ENCODE measurements at regions of chr5 and their contacts with region 1.

Region 1: GRCh38 chr5:135887351-135887864 is 8.2 kb downstream of the IL9 start:
- DNase-seq: peak; percentile 56 to 65
- H3K4me3 ChIP-seq: no peak overlapping the region
- H3K27ac ChIP-seq: no peak overlapping the region
- H3K4me1 ChIP-seq: peaks cover 15% of the 10 kb centered on the region
- H3K27me3 ChIP-seq: peaks cover 20% of the 10 kb centered on the region
- CTCF ChIP-seq: peak; percentile 90

Region 2: DNA sequence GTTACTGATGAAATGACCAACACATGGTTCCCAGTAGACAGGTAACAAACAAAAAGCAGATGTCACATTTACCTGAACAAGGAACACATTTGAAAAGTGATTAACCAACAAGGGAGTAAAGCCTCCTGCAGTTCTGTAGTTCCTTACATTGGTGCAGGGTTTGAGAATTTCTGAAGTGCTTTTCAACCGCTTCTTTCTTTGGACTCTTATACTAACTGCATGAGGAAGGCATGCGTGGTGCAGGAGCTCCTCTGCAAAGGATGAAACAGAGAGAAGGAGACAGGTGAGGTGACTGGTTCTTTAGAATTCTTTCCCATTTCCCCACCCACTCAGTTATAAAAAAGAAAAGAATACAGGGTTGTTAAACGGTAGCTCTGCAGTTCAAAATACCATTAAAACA is 12.9 kb after region 1 on chr5:
- CTCF ChIA-PET with region 1: no interaction called
- POLR2A ChIA-PET with region 1: no interaction called
- intact Hi-C with region 1: no loop called
- DNase-seq: no peak
- H3K4me3 ChIP-seq: no peak overlapping the region
- H3K27ac ChIP-seq: no peak overlapping the region
- H3K4me1 ChIP-seq: peaks cover 3% of the 10 kb centered on the region
- H3K27me3 ChIP-seq: peaks cover 28% of the 10 kb centered on the region; the same call in 1 of the 2 replicates
- CTCF ChIP-seq: no peak

Region 3: DNA sequence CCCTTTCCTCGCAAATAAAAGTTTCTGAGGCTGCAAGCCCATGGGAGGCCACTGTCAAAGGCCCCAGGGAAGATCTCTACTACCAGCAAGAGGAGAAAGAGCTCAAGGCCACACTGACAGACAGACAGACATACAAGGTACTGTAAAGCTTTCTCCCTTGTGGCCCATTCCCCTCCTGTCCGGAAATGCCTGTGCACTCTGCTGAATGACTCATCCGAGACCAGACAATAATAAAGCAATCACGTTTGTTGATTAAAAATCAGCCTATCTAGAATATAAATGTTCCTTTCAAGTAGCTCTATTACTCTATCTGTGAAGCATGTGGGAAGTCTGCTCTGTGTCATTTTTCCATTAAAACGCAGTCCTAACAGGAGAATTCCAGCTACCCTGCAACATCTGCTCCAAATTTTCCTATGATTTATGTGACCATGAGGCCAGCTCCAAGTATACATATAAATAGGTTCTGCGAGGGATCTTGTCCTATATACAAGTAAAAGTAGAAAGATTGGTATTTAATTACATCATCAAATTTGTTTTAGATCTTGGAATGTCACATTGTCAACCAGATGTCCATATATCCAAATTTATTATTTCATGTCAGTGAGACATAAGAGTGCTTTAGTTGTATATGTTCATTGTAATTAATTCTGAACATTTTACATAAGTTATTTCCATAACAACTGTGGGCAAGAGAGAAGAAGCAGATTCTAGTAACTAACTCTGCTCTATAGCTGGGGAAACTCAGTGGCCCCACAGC is 106.7 kb after region 1 on chr5:
- CTCF ChIA-PET with region 1: no interaction called
- POLR2A ChIA-PET with region 1: no interaction called
- intact Hi-C with region 1: no loop called
- DNase-seq: no peak
- H3K4me3 ChIP-seq: no peak overlapping the region
- H3K27ac ChIP-seq: no peak overlapping the region
- H3K4me1 ChIP-seq: no peaks in the 10 kb centered on the region
- H3K27me3 ChIP-seq: no peaks in the 10 kb centered on the region
- CTCF ChIP-seq: no peak

Region 4: GRCh38 chr5:136062366-136063274 is 175.2 kb after region 1 on chr5:
- CTCF ChIA-PET with region 1: no interaction called
- POLR2A ChIA-PET with region 1: no interaction called
- intact Hi-C with region 1: loop called (anchors 1 kb)
- DNase-seq: peak; percentile 26 to 51
- H3K4me3 ChIP-seq: no peak overlapping the region
- H3K27ac ChIP-seq: no peak overlapping the region
- H3K4me1 ChIP-seq: peaks cover 13% of the 10 kb centered on the region
- H3K27me3 ChIP-seq: no peaks in the 10 kb centered on the region
- CTCF ChIP-seq: peak; percentile 74

Region 5: GRCh38 chr5:136174021-136174659 is 286.7 kb after region 1 on chr5:
- CTCF ChIA-PET with region 1: interaction called, 6 read pairs
- POLR2A ChIA-PET with region 1: no interaction called
- intact Hi-C with region 1: loop called (anchors 2 kb)
- DNase-seq: no peak
- H3K4me3 ChIP-seq: no peak overlapping the region
- H3K27ac ChIP-seq: no peak overlapping the region
- H3K4me1 ChIP-seq: no peaks in the 10 kb centered on the region
- H3K27me3 ChIP-seq: no peaks in the 10 kb centered on the region
- CTCF ChIP-seq: peak; percentile 77

Region 6: GRCh38 chr5:136212252-136212721 is 324.9 kb after region 1 on chr5:
- CTCF ChIA-PET with region 1: interaction called, 5 read pairs
- POLR2A ChIA-PET with region 1: no interaction called
- intact Hi-C with region 1: loop called (anchors 1 kb)
- DNase-seq: peak in 1 of 2 experiments; percentile 29
- H3K4me3 ChIP-seq: no peak overlapping the region
- H3K27ac ChIP-seq: no peak overlapping the region
- H3K4me1 ChIP-seq: no peaks in the 10 kb centered on the region
- H3K27me3 ChIP-seq: no peaks in the 10 kb centered on the region
- CTCF ChIP-seq: peak; percentile 91